ENCODE measurements at regions of chr10 and their contacts with region 1.

Region 1: DNA sequence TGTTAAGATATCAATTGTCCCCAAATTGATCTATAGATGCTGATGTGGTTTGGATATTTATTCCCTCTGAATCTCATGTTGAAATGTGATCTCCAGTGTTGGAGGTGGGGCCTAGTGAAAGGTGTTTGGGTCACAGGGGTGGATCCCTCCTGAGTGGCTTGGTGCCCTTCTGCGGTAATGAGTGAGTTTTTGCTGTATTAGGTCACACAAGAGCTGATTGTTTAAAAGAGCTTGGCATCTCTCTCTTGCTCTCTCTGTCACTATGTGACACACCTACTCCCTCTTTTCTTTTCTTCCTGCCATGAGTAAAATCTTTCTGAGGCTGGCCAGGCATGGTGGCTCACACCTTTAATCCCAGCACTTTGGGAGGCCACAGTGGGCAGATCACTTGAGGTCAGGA is 98.2 kb upstream of the KAT6B start:
- DNase-seq: peak; percentile 91
- ATAC-seq: peak; percentile 88
- H3K4me3 ChIP-seq: no peak overlapping the region
- H3K27ac ChIP-seq: peak overlapping the region; percentile 21; the same call in 1 of the 2 replicates
- H3K4me1 ChIP-seq: no peaks in the 10 kb centered on the region
- H3K27me3 ChIP-seq: no peaks in the 10 kb centered on the region
- CTCF ChIP-seq: no peak

Region 2: DNA sequence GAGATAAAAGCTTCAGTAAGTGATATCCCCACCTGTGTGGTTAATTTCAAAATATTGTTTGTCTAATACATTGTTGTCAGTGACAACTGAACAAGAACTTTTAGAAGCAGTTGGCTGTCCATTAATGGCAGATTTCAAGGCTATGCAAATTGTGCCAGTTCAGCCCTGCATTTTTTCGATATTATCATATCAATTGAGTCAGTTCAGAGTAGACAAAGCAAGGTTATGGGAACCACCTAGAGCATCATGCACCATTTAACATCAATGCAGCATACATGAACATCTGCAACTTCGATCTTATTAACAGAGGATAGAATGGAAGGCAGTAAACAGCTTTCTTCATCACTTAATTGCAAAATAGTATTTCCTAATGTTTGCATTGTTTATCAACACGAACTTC is 82.5 kb before region 1 on chr10:
- CTCF ChIA-PET with region 1: no interaction called
- POLR2A ChIA-PET with region 1: interaction called, 4 read pairs
- intact Hi-C with region 1: loop called (anchors 5 kb)
- DNase-seq: no peak
- ATAC-seq: no peak
- H3K4me3 ChIP-seq: no peak overlapping the region
- H3K27ac ChIP-seq: no peak overlapping the region
- H3K4me1 ChIP-seq: peaks cover 30% of the 10 kb centered on the region
- H3K27me3 ChIP-seq: no peaks in the 10 kb centered on the region
- CTCF ChIP-seq: no peak

Region 3: DNA sequence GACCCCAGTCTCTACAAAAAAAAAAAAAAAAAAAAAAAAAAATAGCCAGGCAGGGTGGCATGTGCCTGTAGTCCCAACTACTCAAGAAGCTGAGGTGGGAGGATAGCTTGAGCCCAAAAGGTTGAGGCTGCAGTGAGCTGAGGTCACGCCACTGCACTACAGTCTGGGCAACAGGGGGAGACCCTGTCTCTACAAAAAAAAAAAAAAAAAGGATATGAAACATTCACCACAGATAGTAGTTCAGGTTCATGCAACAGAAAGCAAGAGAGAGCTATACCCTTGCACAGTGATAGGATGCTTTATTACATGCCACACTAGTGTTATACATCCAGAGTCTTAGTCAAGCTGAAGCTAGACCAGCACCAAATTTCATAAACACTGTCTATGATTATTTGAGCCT is 50.3 kb before region 1 on chr10:
- CTCF ChIA-PET with region 1: no interaction called
- POLR2A ChIA-PET with region 1: no interaction called
- intact Hi-C with region 1: loop called (anchors 5 kb)
- DNase-seq: no peak
- ATAC-seq: no peak
- H3K4me3 ChIP-seq: no peak overlapping the region
- H3K27ac ChIP-seq: no peak overlapping the region
- H3K4me1 ChIP-seq: no peaks in the 10 kb centered on the region
- H3K27me3 ChIP-seq: no peaks in the 10 kb centered on the region
- CTCF ChIP-seq: no peak

Measured in PC-3 (cell line).